CD4-positive, alpha-beta memory T cell (primary cell): ENCODE measurements at regions of chr12 and their contacts with region 1.

Region 1: DNA sequence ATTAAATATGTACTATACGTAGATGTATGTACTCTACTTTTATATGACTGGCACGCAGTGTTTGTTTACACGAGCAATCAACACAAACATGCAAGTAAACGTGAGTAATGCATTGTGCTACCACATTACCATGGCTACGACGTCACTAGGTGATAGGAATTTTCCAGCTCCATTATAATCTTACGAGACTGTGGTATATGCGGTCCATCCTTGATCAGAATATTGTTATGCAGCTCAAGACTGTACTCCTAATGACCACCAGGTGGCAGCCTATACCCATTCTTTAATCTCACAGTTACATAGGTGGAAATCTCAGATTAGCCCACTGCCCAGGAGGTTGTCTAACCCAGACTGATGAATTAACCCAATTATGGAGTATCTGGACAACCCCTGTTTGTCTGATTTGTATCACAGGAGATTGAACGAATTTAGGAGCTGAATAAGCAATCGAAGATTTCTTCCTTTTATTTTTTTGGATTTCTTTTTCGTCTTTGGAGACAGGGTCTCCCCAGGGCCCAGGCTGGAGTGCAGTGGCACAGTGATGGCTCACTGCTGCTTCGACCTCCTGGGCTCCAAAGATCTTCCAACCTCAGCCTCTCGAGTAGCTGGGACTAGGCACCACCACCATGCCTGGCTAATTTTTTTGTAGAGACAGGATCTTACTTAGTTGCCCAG is 8.7 kb upstream of the TESPA1 start:
- DNase-seq: peak; percentile 71 to 87 (median 73)
- H3K4me3 ChIP-seq: no peak overlapping the region
- H3K4me3 Mint-ChIP-seq: peak overlapping the region in 3 of 8 donors; percentile 12 to 22 (median 15)
- H3K27ac ChIP-seq: no peak overlapping the region
- H3K27ac Mint-ChIP-seq: peak overlapping the region in 2 of 7 donors; percentile 32 to 36
- H3K4me1 ChIP-seq: peaks cover 46% of the 10 kb centered on the region
- H3K4me1 Mint-ChIP-seq: peaks cover 36 to 49% (median 39%) of the 10 kb centered on the region in 4 donors
- H3K27me3 ChIP-seq: no peaks in the 10 kb centered on the region
- H3K27me3 Mint-ChIP-seq: no peaks in the 10 kb centered on the region

Region 2: DNA sequence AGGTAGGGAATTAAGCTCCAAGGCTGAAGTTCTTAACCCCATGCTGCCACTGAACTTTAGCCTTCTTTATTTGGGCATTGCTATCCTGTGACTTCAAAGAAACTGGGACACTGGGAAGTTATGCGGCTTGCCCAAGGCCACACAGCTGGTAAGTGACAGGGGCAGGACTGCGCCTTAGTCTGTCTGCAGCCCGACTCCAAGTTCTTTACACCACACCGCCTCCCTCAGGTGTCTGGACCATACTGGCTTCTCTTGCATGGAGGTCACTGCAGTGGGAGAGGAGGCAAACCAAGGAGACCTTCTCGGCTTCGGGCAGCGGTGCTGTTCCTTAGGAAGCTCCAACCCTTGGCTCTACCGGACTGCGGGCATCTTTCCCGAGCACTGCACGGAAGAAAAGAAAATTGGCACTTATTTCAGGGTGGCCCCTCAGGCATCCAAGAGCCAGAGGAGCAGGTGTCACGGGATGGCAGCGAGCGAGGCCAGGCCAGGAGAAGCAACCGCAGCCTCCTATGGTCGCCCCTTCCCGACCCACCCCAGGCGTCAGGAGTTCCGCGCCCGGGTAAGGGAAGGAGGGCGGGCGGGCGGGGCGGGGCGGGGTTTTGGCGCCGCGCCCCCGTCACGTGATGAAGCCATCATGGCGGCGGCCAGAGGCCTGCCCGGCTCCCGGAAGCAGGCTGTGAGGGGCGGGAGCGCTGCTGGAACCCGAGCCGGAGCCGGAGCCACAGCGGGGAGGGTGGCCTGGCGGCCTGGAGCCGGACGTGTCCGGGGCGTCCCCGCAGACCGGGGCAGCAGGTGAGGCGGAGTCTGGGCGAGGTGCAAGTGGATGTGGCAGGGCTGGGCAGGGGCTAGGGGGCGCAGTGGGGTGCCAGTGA is 1741.6 kb before region 1 on chr12:
- CTCF ChIA-PET with region 1: no interaction called
- POLR2A ChIA-PET with region 1: no interaction called
- intact Hi-C with region 1: no loop called
- DNase-seq: peak; percentile 67 to 78 (median 71)
- H3K4me3 ChIP-seq: peak overlapping the region; percentile 73 to 92
- H3K4me3 Mint-ChIP-seq: peak overlapping the region; percentile 96 to 100 (median 98)
- H3K27ac ChIP-seq: peak overlapping the region; percentile 83
- H3K27ac Mint-ChIP-seq: peak overlapping the region; percentile 96 to 99 (median 98)
- H3K4me1 ChIP-seq: peaks cover 46% of the 10 kb centered on the region
- H3K4me1 Mint-ChIP-seq: peaks cover 23 to 52% (median 41%) of the 10 kb centered on the region in 4 donors
- H3K27me3 ChIP-seq: no peaks in the 10 kb centered on the region
- H3K27me3 Mint-ChIP-seq: no peaks in the 10 kb centered on the region

Region 3: DNA sequence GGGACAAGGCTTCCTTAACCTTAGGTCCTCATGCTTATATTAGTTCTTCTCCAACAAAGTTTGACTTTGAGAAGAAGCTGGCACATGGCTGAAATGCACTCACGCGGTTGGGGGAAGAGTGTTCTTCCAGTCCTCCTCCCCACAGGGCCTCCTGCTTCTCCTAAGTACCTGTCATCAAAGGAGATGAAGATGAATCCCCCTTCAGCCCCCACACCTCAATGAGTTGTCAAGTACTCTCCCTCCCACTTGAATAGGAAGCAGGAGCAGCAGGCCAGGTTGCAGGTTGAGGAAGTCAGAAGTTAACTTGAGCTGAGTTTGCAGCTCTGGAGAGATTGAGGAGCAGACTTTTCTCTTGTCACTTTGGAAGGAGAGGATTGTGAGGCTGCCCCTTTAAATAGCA is 446.8 kb before region 1 on chr12:
- CTCF ChIA-PET with region 1: no interaction called
- POLR2A ChIA-PET with region 1: no interaction called
- intact Hi-C with region 1: no loop called
- DNase-seq: no peak
- H3K4me3 ChIP-seq: no peak overlapping the region
- H3K4me3 Mint-ChIP-seq: peak overlapping the region in 1 of 8 donors; percentile 29
- H3K27ac ChIP-seq: no peak overlapping the region
- H3K27ac Mint-ChIP-seq: peak overlapping the region in 4 of 7 donors; percentile 17 to 68 (median 46)
- H3K4me1 ChIP-seq: peaks cover 15% of the 10 kb centered on the region
- H3K4me1 Mint-ChIP-seq: peaks cover 7 to 35% (median 17%) of the 10 kb centered on the region in 4 donors
- H3K27me3 ChIP-seq: no peaks in the 10 kb centered on the region
- H3K27me3 Mint-ChIP-seq: no peaks in the 10 kb centered on the region

Region 4: DNA sequence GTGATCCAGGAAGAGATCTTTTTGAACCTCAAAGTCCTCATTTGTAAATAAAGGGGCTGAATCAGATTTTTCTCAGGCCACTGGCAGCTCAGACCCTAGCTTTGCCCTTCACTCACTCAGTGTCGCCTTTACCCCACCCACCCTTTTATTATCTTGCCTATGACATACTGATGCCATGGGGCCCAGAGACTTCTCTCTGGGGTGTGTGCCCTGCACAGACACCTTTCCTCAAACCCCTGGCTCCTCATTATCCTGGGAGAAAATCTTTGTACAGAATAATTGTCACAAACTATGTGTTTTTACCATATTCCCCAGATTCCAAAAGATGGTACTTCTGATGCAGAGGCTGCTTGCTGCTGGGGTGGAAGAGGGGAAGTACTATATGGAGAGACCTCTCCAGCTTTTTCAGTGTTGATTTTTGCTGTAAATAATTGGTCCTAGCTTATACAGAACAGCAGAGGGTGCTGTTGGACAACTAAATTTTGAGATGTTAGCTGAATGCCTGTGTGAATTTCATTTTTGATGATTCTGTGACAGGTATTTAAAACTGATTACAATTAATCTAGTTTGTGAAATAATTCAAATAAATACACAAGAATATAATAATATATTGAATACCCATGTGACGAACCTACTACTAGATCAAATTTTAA is 291.2 kb before region 1 on chr12:
- CTCF ChIA-PET with region 1: interaction called, 10 read pairs
- POLR2A ChIA-PET with region 1: no interaction called
- intact Hi-C with region 1: loop called (anchors 1 kb)
- DNase-seq: peak in 4 of 5 donors; percentile 48 to 55 (median 54)
- H3K4me3 ChIP-seq: no peak overlapping the region
- H3K4me3 Mint-ChIP-seq: no peak overlapping the region
- H3K27ac ChIP-seq: no peak overlapping the region
- H3K27ac Mint-ChIP-seq: no peak overlapping the region
- H3K4me1 ChIP-seq: no peaks in the 10 kb centered on the region
- H3K4me1 Mint-ChIP-seq: no peaks in the 10 kb centered on the region
- H3K27me3 ChIP-seq: no peaks in the 10 kb centered on the region
- H3K27me3 Mint-ChIP-seq: peaks cover 5 to 6% of the 10 kb centered on the region in 2 donors

Region 5: GRCh38 chr12:54749191-54749818 is 244.0 kb before region 1 on chr12:
- CTCF ChIA-PET with region 1: interaction called, 101 read pairs
- POLR2A ChIA-PET with region 1: interaction called, 15 read pairs
- intact Hi-C with region 1: loop called (anchors 1 kb)
- DNase-seq: peak; percentile 41 to 65 (median 59)
- H3K4me3 ChIP-seq: no peak overlapping the region
- H3K4me3 Mint-ChIP-seq: peak overlapping the region in 7 of 8 donors; percentile 50 to 73 (median 68)
- H3K27ac ChIP-seq: no peak overlapping the region
- H3K27ac Mint-ChIP-seq: peak overlapping the region in 2 of 7 donors; percentile 48 to 63
- H3K4me1 ChIP-seq: peaks cover 18% of the 10 kb centered on the region
- H3K4me1 Mint-ChIP-seq: peaks cover 13 to 40% (median 21%) of the 10 kb centered on the region in 4 donors
- H3K27me3 ChIP-seq: no peaks in the 10 kb centered on the region
- H3K27me3 Mint-ChIP-seq: no peaks in the 10 kb centered on the region

Region 6: GRCh38 chr12:54935235-54935951 is 57.9 kb before region 1 on chr12:
- CTCF ChIA-PET with region 1: interaction called, 11 read pairs
- POLR2A ChIA-PET with region 1: interaction called, 9 read pairs
- intact Hi-C with region 1: loop called (anchors 2 kb)
- DNase-seq: peak; percentile 53 to 71 (median 60)
- H3K4me3 ChIP-seq: no peak overlapping the region
- H3K4me3 Mint-ChIP-seq: peak overlapping the region in 7 of 8 donors; percentile 42 to 85 (median 74)
- H3K27ac ChIP-seq: peak overlapping the region; percentile 35
- H3K27ac Mint-ChIP-seq: peak overlapping the region; percentile 80 to 96 (median 91)
- H3K4me1 ChIP-seq: peaks cover 45% of the 10 kb centered on the region
- H3K4me1 Mint-ChIP-seq: peaks cover 33 to 53% (median 44%) of the 10 kb centered on the region in 4 donors
- H3K27me3 ChIP-seq: no peaks in the 10 kb centered on the region
- H3K27me3 Mint-ChIP-seq: no peaks in the 10 kb centered on the region

Region 7: GRCh38 chr12:54967461-54967860 is 25.8 kb before region 1 on chr12:
- CTCF ChIA-PET with region 1: interaction called, 67 read pairs
- POLR2A ChIA-PET with region 1: interaction called, 5 read pairs
- intact Hi-C with region 1: no loop called
- DNase-seq: peak in 1 of 5 donors; percentile 59
- H3K4me3 ChIP-seq: no peak overlapping the region
- H3K4me3 Mint-ChIP-seq: peak overlapping the region in 7 of 8 donors; percentile 56 to 84 (median 80)
- H3K27ac ChIP-seq: peak overlapping the region; percentile 46
- H3K27ac Mint-ChIP-seq: peak overlapping the region; percentile 58 to 94 (median 87)
- H3K4me1 ChIP-seq: peaks cover 74% of the 10 kb centered on the region
- H3K4me1 Mint-ChIP-seq: peaks cover 59 to 91% (median 79%) of the 10 kb centered on the region in 4 donors
- H3K27me3 ChIP-seq: no peaks in the 10 kb centered on the region
- H3K27me3 Mint-ChIP-seq: no peaks in the 10 kb centered on the region

Region 8: GRCh38 chr12:55037351-55037987 is 44.2 kb after region 1 on chr12:
- CTCF ChIA-PET with region 1: interaction called, 24 read pairs
- POLR2A ChIA-PET with region 1: no interaction called
- intact Hi-C with region 1: no loop called
- DNase-seq: no peak
- H3K4me3 ChIP-seq: no peak overlapping the region
- H3K4me3 Mint-ChIP-seq: peak overlapping the region in 2 of 8 donors; percentile 11
- H3K27ac ChIP-seq: no peak overlapping the region
- H3K27ac Mint-ChIP-seq: peak overlapping the region in 2 of 7 donors; percentile 7 to 23
- H3K4me1 ChIP-seq: peaks cover 21% of the 10 kb centered on the region
- H3K4me1 Mint-ChIP-seq: peaks cover 26 to 44% (median 32%) of the 10 kb centered on the region in 4 donors
- H3K27me3 ChIP-seq: no peaks in the 10 kb centered on the region
- H3K27me3 Mint-ChIP-seq: peaks cover 0 to 2% of the 10 kb centered on the region in 2 donors

Region 9: GRCh38 chr12:55142669-55143565 is 149.6 kb after region 1 on chr12:
- CTCF ChIA-PET with region 1: interaction called, 18 read pairs
- POLR2A ChIA-PET with region 1: no interaction called
- intact Hi-C with region 1: loop called (anchors 1 kb)
- DNase-seq: peak in 4 of 5 donors; percentile 17 to 33 (median 26)
- H3K4me3 ChIP-seq: no peak overlapping the region
- H3K4me3 Mint-ChIP-seq: no peak overlapping the region
- H3K27ac ChIP-seq: no peak overlapping the region
- H3K27ac Mint-ChIP-seq: no peak overlapping the region
- H3K4me1 ChIP-seq: no peaks in the 10 kb centered on the region
- H3K4me1 Mint-ChIP-seq: peaks cover 0 to 5% (median 2%) of the 10 kb centered on the region in 4 donors
- H3K27me3 ChIP-seq: no peaks in the 10 kb centered on the region
- H3K27me3 Mint-ChIP-seq: peaks cover 5 to 6% of the 10 kb centered on the region in 2 donors